ENCODE measurements at regions of chr3 and their contacts with region 1.

Region 1: GRCh38 chr3:119891944-119892721 is 110.2 kb downstream of the NR1I2 start:
- DNase-seq: peak; percentile 13 to 45
- H3K4me3 ChIP-seq: no peak overlapping the region
- H3K27ac ChIP-seq: no peak overlapping the region
- H3K4me1 ChIP-seq: no peaks in the 10 kb centered on the region
- H3K27me3 ChIP-seq: no peaks in the 10 kb centered on the region
- CTCF ChIP-seq: peak in 2 of 3 experiments; percentile 67 to 78; a peak in 2 of 4 replicates
- EP300 ChIP-seq: no peak
- POLR2A ChIP-seq: no peak
- RAD21 ChIP-seq: peak; percentile 92 to 93

Region 2: GRCh38 chr3:119880966-119881365 is 11.2 kb before region 1 on chr3:
- CTCF ChIA-PET with region 1: interaction called, 22 read pairs
- POLR2A ChIA-PET with region 1: no interaction called
- DNase-seq: no peak
- H3K4me3 ChIP-seq: no peak overlapping the region
- H3K27ac ChIP-seq: no peak overlapping the region
- H3K4me1 ChIP-seq: peaks cover 0 to 3% (median 1%) of the 10 kb centered on the region in 4 experiments; a peak in 2 of 7 replicates
- H3K27me3 ChIP-seq: no peaks in the 10 kb centered on the region
- CTCF ChIP-seq: no peak
- EP300 ChIP-seq: no peak
- POLR2A ChIP-seq: no peak
- RAD21 ChIP-seq: no peak

Region 3: DNA sequence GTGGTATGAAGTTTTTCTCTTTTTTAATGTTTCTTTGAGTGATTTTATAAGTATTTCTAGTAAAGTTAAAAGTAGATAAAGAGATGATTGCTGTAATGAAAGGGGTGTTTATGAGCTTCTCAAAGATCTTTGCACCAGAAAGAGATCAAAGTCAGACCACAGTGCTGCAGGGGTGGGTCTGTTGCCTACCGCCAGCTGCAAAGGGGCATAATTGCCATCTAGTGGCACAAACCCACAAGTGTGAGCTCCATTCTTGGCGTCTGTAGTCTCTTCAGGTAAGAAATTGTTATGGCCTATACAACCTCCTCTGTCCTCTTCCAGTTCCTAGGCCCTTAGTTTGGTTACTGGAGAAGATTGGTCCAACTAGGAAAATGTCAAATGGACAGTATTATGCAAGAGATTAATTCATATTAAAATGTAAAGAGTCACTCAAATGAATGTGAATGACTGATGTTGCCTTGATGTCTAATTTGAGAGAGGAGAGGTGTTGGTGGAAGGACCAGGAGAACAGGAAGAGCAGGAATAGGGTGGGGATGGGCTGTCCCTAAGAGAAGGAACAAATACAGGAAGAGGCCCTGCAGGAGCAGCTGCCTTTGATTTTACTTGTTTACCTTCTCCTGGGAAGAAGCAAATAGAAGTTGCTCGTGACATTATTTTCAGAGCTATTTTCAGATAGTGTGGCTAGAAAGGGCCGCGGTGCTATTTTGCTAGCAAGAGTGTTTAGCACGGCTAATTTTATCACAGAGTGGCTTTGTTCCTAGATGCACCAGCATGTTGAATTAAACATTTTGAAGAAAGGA is 255.1 kb after region 1 on chr3:
- CTCF ChIA-PET with region 1: interaction called, 18 read pairs
- POLR2A ChIA-PET with region 1: no interaction called
- DNase-seq: no peak
- H3K4me3 ChIP-seq: no peak overlapping the region
- H3K27ac ChIP-seq: no peak overlapping the region
- H3K4me1 ChIP-seq: peaks cover 0 to 4% (median 2%) of the 10 kb centered on the region in 4 experiments; a peak in 3 of 7 replicates
- H3K27me3 ChIP-seq: no peaks in the 10 kb centered on the region
- CTCF ChIP-seq: peak; percentile 55 to 68 (median 65)
- EP300 ChIP-seq: no peak
- POLR2A ChIP-seq: no peak
- RAD21 ChIP-seq: peak; percentile 81 to 85

Region 4: DNA sequence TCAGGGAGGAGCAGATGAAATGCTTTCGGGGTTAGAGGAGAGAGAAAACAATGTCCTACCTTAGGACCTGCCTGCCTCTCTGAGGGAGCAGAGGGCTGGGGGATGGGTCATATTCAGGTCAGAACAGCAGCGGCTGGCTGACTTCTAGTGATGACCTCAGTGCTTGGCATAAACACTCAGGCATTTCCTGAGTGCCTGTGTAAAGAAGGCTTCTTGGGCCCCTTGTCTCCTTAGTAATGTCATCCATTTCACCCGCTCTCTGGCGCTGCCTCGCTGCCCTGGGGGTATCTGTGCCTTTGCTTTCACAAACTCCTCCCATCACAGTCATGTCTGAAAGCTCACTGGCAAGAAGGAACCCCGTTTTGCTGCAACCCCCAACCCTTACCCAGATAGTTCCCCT is 285.0 kb after region 1 on chr3:
- CTCF ChIA-PET with region 1: interaction called, 13 read pairs
- POLR2A ChIA-PET with region 1: no interaction called
- DNase-seq: peak in 1 of 2 experiments; percentile 39
- H3K4me3 ChIP-seq: no peak overlapping the region
- H3K27ac ChIP-seq: no peak overlapping the region
- H3K4me1 ChIP-seq: no peaks in the 10 kb centered on the region; a peak in 1 of 7 replicates
- H3K27me3 ChIP-seq: no peaks in the 10 kb centered on the region
- CTCF ChIP-seq: no peak
- EP300 ChIP-seq: no peak
- POLR2A ChIP-seq: no peak
- RAD21 ChIP-seq: no peak

Region 5: GRCh38 chr3:120198305-120198878 is 306.3 kb after region 1 on chr3:
- CTCF ChIA-PET with region 1: no interaction called
- POLR2A ChIA-PET with region 1: no interaction called
- DNase-seq: no peak
- H3K4me3 ChIP-seq: no peak overlapping the region
- H3K27ac ChIP-seq: no peak overlapping the region
- H3K4me1 ChIP-seq: no peaks in the 10 kb centered on the region
- H3K27me3 ChIP-seq: no peaks in the 10 kb centered on the region
- CTCF ChIP-seq: no peak
- EP300 ChIP-seq: no peak
- POLR2A ChIP-seq: no peak
- RAD21 ChIP-seq: peak; percentile 28 to 47; a peak in 3 of 4 replicates